Adrenal gland (tissue), 19 donors: ENCODE measurements at regions of chr11 and their contacts with region 1.

Region 1: GRCh38 chr11:33996498-33997454 is 54.8 kb upstream of the CAPRIN1 start:
- DNase-seq: peak; percentile 59 to 88 (median 76)
- H3K4me3 ChIP-seq: no peak overlapping the region
- H3K27ac ChIP-seq: no peak overlapping the region
- H3K4me1 ChIP-seq: peaks cover 0 to 5% of the 10 kb centered on the region in 2 donors
- H3K27me3 ChIP-seq: no peaks in the 10 kb centered on the region
- CTCF ChIP-seq: peak; percentile 72 to 87 (median 78)
- POLR2A ChIP-seq: no peak

Region 2: GRCh38 chr11:34044664-34045485 is 48.1 kb after region 1 on chr11:
- intact Hi-C with region 1: loop called in 1 of 2 experiments (anchors 10 kb)
- DNase-seq: peak in 3 of 7 donors; percentile 33 to 56 (median 47)
- H3K4me3 ChIP-seq: no peak overlapping the region
- H3K27ac ChIP-seq: peak overlapping the region in 2 of 5 donors; percentile 2 to 48
- H3K4me1 ChIP-seq: no peaks in the 10 kb centered on the region
- H3K27me3 ChIP-seq: no peaks in the 10 kb centered on the region
- CTCF ChIP-seq: no peak
- POLR2A ChIP-seq: no peak

Region 3: DNA sequence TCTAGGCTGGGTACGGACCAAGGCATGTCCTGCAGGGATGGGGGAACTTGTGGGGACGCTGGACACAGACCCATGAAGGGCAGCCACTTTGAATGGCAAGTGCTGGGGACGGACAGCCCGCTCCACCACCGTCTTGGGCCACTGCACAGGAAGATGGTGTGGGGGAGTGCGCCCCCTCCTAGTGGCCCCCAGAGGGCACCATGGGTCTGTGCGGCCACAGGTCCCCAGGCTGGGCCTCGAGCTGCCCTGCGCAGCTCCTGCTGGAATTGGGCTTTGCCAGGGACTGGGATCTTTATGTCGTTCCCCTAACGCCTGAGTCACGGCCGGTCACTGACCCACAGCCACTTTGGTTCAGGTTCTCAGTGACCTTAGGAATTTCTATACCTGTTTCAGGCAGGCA is 153.0 kb after region 1 on chr11:
- intact Hi-C with region 1: loop called in 1 of 2 experiments (anchors 10 kb)
- DNase-seq: no peak
- H3K4me3 ChIP-seq: no peak overlapping the region
- H3K27ac ChIP-seq: no peak overlapping the region
- H3K4me1 ChIP-seq: peaks cover 0 to 9% of the 10 kb centered on the region in 2 donors
- H3K27me3 ChIP-seq: no peaks in the 10 kb centered on the region
- CTCF ChIP-seq: peak in 3 of 6 experiments; percentile 15 to 31 (median 27)
- POLR2A ChIP-seq: no peak